Mammary epithelial cell (primary cell): ENCODE measurements at regions of chr6 and their contacts with region 1.

Region 1: GRCh38 chr6:150256618-150257272 is 112.1 kb upstream of the IYD start:
- DNase-seq: peak; percentile 100
- H3K4me3 ChIP-seq: no peak overlapping the region
- H3K27ac ChIP-seq: peak overlapping the region; percentile 99
- H3K4me1 ChIP-seq: peaks cover 64% of the 10 kb centered on the region
- H3K27me3 ChIP-seq: no peaks in the 10 kb centered on the region
- CTCF ChIP-seq: no peak

Region 2: DNA sequence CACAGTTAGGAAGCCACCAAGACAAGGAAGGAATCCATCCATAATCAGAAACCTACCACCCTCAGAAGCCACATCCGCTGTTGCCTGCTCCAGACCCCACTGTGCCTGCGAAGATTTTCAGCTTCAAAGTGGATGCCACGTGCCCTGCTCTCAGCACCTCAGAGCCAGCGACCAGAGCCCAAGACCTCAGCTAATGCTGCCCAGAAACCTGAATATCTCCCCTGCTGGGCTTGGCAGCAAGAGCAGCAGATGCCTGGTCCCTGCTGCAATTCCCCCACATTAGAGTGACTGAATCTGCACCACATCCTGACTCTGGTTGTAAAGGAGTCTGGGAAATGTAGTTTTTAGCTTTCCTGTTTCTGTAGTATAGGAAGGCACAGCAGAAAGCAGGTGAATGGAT is 177.1 kb before region 1 on chr6:
- CTCF ChIA-PET with region 1: no interaction called
- dilution Hi-C with region 1: no loop called
- in situ Hi-C with region 1: no loop called
- intact Hi-C with region 1: loop called (anchors 2 kb)
- DNase-seq: no peak
- H3K4me3 ChIP-seq: no peak overlapping the region
- H3K27ac ChIP-seq: no peak overlapping the region
- H3K4me1 ChIP-seq: peaks cover 8% of the 10 kb centered on the region
- H3K27me3 ChIP-seq: no peaks in the 10 kb centered on the region
- CTCF ChIP-seq: no peak

Region 3: DNA sequence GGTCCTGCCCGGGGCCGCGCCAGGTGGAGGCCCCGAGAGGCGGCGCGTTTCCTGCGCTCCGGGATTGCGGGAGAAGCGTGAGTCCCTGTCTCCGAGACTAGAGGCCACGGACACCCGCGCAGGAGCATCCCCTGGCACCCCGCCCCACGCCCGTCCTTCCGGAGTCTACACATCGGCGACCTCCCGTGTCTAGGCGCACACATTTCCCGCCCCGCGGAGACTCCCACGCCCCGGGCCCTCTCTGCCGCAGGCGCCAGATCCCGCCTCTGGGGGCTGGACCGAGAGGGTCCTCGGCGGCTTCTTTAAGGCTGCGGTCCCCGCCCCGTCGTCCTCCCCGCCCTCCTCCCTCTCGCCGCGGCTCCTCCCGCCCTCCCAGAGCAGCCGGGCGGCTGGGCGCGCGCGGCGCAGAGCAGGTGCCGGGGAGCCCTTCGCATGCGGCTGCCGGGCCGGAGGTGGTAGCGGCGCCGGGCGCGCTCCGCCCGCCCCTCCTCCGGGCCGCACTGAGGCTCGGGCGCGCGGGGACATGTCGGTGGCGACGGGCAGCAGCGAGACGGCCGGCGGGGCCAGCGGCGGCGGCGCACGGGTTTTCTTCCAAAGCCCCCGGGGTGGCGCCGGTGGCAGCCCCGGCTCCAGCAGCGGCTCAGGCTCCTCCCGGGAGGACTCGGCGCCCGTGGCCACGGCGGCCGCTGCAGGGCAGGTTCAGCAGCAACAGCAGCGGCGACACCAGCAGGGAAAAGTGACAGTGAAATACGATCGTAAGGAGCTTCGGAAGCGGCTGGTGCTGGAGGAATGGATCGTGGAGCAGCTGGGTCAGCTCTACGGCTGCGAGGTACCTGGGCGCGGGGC is 113.9 kb before region 1 on chr6 and contains the start of gene PPP1R14C:
- CTCF ChIA-PET with region 1: no interaction called
- dilution Hi-C with region 1: no loop called
- in situ Hi-C with region 1: no loop called
- intact Hi-C with region 1: loop called (anchors 2 kb)
- DNase-seq: peak; percentile 84
- H3K4me3 ChIP-seq: peak within 1 kb of the TSS; percentile 90 to 95 (median 91)
- H3K27ac ChIP-seq: peak within 1 kb of the TSS; percentile 73
- H3K4me1 ChIP-seq: peaks cover 26% of the 10 kb centered on the region
- H3K27me3 ChIP-seq: no peaks in the 10 kb centered on the region
- CTCF ChIP-seq: no peak
- total RNA-seq, gene PPP1R14C: 46.8 to 56.2 TPM

Region 4: GRCh38 chr6:150153542-150153876 is 103.2 kb before region 1 on chr6:
- CTCF ChIA-PET with region 1: no interaction called
- dilution Hi-C with region 1: no loop called
- in situ Hi-C with region 1: loop called in 1 of 2 experiments (anchors 5 kb)
- intact Hi-C with region 1: no loop called
- DNase-seq: peak; percentile 67
- H3K4me3 ChIP-seq: peak overlapping the region in 2 of 3 experiments; percentile 12 to 16
- H3K27ac ChIP-seq: peak overlapping the region; percentile 81
- H3K4me1 ChIP-seq: peaks cover 55% of the 10 kb centered on the region
- H3K27me3 ChIP-seq: no peaks in the 10 kb centered on the region
- CTCF ChIP-seq: no peak

Region 5: GRCh38 chr6:150267686-150268561 is 11.2 kb after region 1 on chr6:
- CTCF ChIA-PET with region 1: interaction called, 6 read pairs
- dilution Hi-C with region 1: no loop called
- in situ Hi-C with region 1: no loop called
- intact Hi-C with region 1: loop called (anchors 1 kb)
- DNase-seq: peak; percentile 91
- H3K4me3 ChIP-seq: no peak overlapping the region
- H3K27ac ChIP-seq: peak overlapping the region; percentile 99
- H3K4me1 ChIP-seq: peaks cover 65% of the 10 kb centered on the region
- H3K27me3 ChIP-seq: no peaks in the 10 kb centered on the region
- CTCF ChIP-seq: peak in 1 of 2 donors; percentile 35

Region 6: DNA sequence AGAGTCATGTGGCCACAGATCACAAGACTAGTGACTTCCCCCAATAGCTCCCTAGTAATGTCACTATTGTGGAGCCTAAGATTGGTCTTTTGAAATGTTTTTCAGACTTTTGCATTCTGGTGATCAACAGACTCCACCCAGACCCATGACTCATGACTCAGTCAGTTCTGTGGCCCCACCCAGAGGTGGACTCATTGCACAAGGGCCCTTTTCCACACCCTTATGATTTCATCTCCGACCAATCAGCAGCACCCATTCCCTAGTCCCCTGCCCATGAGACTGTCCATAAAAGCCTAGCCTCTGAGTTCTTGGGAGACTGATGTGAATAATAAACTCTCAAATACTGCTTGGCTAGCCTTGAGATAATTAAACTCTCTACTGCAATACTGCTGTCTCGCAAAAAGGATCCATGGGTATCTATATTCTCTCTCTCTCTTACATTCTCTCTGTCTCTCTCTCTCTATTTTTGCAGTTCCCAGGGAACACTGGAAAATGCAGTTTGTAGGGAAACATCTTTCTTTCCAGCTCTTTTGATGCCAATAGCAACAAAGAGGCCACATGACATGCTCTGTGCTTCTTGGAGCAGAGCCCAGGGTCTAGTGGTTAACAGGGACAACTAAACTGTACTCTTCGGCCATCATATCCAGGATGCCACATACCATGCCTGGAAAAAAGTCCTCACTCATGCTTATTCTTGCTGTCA is 40.7 kb after region 1 on chr6:
- CTCF ChIA-PET with region 1: interaction called, 6 read pairs
- dilution Hi-C with region 1: no loop called
- in situ Hi-C with region 1: no loop called
- intact Hi-C with region 1: loop called (anchors 1 kb)
- DNase-seq: peak; percentile 99
- H3K4me3 ChIP-seq: peak overlapping the region; percentile 3 to 12 (median 9)
- H3K27ac ChIP-seq: peak overlapping the region; percentile 99
- H3K4me1 ChIP-seq: peaks cover 52% of the 10 kb centered on the region
- H3K27me3 ChIP-seq: no peaks in the 10 kb centered on the region
- CTCF ChIP-seq: no peak

Region 7: DNA sequence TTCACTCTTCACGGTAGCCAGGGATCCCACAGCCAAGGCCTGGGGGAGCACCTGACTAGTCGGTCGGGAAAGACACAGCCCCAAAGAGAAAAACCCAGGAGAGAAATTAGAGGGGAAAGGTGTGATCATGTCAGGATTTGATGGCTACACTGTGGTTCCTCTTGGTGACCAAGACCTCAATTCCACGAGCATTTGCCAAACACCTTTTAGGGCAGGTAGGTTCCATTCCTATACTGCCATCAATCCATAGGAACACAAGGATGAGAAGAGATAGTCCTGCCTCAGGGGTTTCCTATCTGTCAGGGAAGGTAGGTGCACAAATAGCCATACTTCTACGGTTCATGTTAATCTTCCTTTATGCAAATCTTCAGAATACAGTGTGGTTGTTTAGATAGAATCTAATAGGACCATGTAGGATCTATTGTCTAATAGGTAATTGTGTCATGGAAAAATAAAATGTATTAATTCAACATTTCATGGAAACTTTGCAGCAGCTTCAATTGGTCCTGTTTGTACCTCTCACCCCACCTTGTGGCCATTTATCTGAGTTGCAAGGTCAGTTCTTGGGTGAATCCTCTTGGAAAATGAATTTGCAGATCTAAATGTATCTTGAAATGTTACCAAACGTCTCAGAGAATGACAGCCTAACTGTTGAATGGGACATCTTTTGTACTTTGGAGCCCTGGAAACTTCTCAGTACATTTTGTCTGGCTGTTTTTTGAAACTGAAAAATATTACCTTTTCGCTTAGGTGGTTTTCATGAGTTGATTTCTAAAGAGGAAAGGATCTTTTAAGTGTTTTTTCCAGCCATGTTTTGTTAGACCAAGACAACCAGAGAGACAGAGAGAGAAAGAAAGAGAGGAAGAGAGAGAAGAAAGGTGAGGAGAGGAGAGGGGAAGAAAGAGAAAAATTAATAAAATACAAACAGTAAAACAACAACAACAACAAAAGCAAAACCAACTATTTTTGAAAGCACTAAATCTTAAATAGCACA is 78.3 kb after region 1 on chr6:
- CTCF ChIA-PET with region 1: no interaction called
- dilution Hi-C with region 1: no loop called
- in situ Hi-C with region 1: loop called in 1 of 2 experiments (anchors 5 kb)
- intact Hi-C with region 1: loop called (anchors 1 kb)
- DNase-seq: peak; percentile 67
- H3K4me3 ChIP-seq: no peak overlapping the region
- H3K27ac ChIP-seq: peak overlapping the region; percentile 59
- H3K4me1 ChIP-seq: peaks cover 26% of the 10 kb centered on the region
- H3K27me3 ChIP-seq: no peaks in the 10 kb centered on the region
- CTCF ChIP-seq: peak; percentile 82 to 88